ENCODE measurements at regions of chr5 and their contacts with region 1.

Region 1: GRCh38 chr5:122101636-122102285 is 23.7 kb upstream of the LOX start:
- DNase-seq: peak; percentile 52 to 70 (median 70)
- H3K4me3 ChIP-seq: no peak overlapping the region
- H3K27ac ChIP-seq: no peak overlapping the region
- H3K4me1 ChIP-seq: peaks cover 0 to 5% (median 0%) of the 10 kb centered on the region in 4 experiments
- H3K27me3 ChIP-seq: no peaks in the 10 kb centered on the region

Region 2: GRCh38 chr5:121962347-121962670 is 139.5 kb before region 1 on chr5:
- CTCF ChIA-PET with region 1: interaction called, 28 read pairs
- POLR2A ChIA-PET with region 1: no interaction called
- DNase-seq: peak in 1 of 3 donors; percentile 6
- H3K4me3 ChIP-seq: peak overlapping the region in 6 of 7 experiments; percentile 74 to 95 (median 90)
- H3K27ac ChIP-seq: peak overlapping the region; percentile 79 to 90
- H3K4me1 ChIP-seq: peaks cover 2 to 23% (median 13%) of the 10 kb centered on the region in 4 experiments
- H3K27me3 ChIP-seq: no peaks in the 10 kb centered on the region

Region 3: DNA sequence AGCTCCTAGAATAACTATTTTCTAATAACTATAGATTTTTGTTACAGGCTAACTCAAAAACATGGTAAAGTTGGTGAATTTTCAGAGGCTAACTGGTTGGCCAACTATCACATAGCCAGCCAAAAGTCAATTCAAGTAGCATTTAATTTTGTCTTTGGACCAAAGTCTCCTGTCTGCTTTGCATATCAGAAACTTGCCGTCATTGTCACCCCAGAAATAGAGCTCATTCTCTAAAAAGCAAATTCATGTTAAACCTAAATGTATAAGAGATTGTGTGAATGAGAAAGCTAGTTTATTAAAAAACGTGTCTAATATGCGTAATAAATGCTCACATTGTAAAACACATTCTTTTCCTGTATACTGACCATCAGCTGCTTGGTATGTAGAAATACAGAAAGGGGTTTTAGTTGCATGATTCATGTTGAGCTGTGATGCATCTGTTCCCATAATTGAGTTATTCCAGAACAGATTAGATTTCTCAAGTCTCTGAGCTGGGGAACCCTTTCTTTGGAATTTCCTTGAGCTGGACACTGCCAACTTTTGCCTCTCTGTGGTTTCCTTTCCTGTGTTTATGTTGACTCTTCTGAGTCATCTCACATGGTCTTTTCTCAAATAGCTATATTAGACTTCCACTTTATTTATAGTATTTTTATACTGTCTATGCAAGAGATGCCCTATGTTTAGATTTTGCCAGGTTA is 132.7 kb before region 1 on chr5:
- CTCF ChIA-PET with region 1: interaction called, 28 read pairs
- POLR2A ChIA-PET with region 1: no interaction called
- DNase-seq: no peak
- H3K4me3 ChIP-seq: no peak overlapping the region
- H3K27ac ChIP-seq: no peak overlapping the region
- H3K4me1 ChIP-seq: peaks cover 6 to 9% (median 6%) of the 10 kb centered on the region in 4 experiments
- H3K27me3 ChIP-seq: no peaks in the 10 kb centered on the region

Region 4: DNA sequence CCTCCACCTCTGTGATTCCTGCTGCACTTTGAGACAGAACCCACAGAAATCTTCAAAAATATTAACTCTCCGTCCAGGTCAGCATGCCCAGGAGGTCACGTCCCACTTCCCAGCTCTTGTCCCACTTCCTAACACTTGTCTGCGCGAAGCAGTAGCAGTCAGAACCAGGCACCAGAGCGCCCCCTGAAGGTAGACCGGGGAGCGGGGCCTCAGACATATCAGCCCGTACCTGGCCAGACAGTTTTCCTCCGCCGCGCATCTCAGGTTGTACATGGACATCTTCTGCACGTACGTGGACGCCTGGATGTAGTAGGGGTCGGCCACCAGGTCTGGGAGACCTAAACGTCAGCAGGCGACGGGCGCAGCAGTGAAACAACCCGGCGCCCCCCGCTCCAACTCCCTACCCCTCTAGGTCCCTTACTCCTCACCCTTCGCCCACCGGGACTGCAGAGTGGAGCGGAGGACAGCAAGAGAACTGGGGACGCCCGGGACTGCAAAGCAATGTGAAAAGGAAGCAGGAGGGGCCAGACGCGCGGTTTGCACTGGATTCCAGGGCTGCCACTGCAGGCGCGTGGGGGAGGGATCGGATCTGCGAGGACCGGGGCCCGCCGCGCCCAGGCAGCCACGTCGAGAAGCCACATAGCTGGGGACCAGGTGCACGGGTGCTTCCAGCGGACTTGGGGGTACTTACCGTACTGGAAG is 24.9 kb before region 1 on chr5:
- CTCF ChIA-PET with region 1: interaction called, 10 read pairs
- POLR2A ChIA-PET with region 1: no interaction called
- DNase-seq: peak; percentile 63 to 90 (median 74)
- H3K4me3 ChIP-seq: peak overlapping the region; percentile 33 to 82 (median 67)
- H3K27ac ChIP-seq: peak overlapping the region in 1 of 2 experiments; percentile 57
- H3K4me1 ChIP-seq: peaks cover 16 to 56% (median 29%) of the 10 kb centered on the region in 4 experiments
- H3K27me3 ChIP-seq: peaks cover 0 to 4% (median 2%) of the 10 kb centered on the region in 5 experiments

Region 5: DNA sequence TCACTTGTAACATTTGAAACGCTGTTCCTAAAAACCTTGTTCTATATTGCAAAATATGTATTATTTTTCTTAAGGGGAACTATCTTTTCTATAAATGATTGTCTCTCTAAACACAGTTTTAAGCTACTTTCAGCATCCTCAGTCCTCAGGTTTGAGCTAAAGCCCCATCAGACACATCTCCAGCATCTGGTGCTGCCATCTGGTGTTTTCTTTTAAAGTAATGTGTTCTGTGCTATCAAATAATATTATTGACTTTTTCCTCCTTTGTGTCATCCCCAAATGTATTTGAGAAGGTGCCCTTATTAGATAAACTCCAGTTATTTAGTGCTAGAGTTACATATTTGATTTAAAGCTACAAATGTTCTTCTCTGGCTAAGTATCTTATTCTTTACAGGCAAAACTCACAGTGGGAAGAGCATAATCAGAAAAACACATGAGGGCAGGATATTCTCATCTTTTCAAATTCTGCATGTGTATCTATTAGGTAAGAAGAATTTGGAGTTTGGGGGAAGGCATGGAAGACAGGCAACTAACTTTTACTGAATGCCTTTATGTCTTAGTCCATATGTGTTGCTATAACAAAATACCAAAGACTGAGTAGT is 55.1 kb after region 1 on chr5:
- CTCF ChIA-PET with region 1: interaction called, 11 read pairs
- POLR2A ChIA-PET with region 1: no interaction called
- DNase-seq: peak; percentile 41 to 68 (median 63)
- H3K4me3 ChIP-seq: no peak overlapping the region
- H3K27ac ChIP-seq: no peak overlapping the region
- H3K4me1 ChIP-seq: peaks cover 0 to 10% (median 8%) of the 10 kb centered on the region in 4 experiments
- H3K27me3 ChIP-seq: no peaks in the 10 kb centered on the region